MCF 10A (cell line): ENCODE measurements at regions of chr15 and their contacts with region 1.

Region 1: GRCh38 chr15:60397772-60398445 is at the start of gene ANXA2:
- DNase-seq: peak; percentile 90
- H3K4me3 Mint-ChIP-seq: peak within 1 kb of the TSS; percentile 98
- H3K27ac Mint-ChIP-seq: peak within 1 kb of the TSS; percentile 91
- H3K4me1 Mint-ChIP-seq: peaks cover 55% of the 10 kb centered on the region
- H3K27me3 Mint-ChIP-seq: no peaks in the 10 kb centered on the region
- CTCF ChIP-seq: no peak
- total RNA-seq, gene ANXA2: 3,317 and 3,451 TPM in 2 replicates

Region 2: GRCh38 chr15:60264566-60264965 is 133.3 kb before region 1 on chr15:
- CTCF ChIA-PET with region 1: no interaction called
- POLR2A ChIA-PET with region 1: no interaction called
- intact Hi-C with region 1: no loop called
- DNase-seq: no peak
- H3K4me3 Mint-ChIP-seq: no peak overlapping the region
- H3K27ac Mint-ChIP-seq: no peak overlapping the region
- H3K4me1 Mint-ChIP-seq: no peaks in the 10 kb centered on the region
- H3K27me3 Mint-ChIP-seq: peaks cover 33% of the 10 kb centered on the region
- CTCF ChIP-seq: no peak

Region 3: GRCh38 chr15:60362321-60363086 is 35.4 kb before region 1 on chr15:
- CTCF ChIA-PET with region 1: interaction called, 11 read pairs
- POLR2A ChIA-PET with region 1: interaction called, 165 read pairs
- intact Hi-C with region 1: loop called (anchors 5 kb)
- DNase-seq: peak; percentile 74
- H3K4me3 Mint-ChIP-seq: peak overlapping the region; percentile 5
- H3K27ac Mint-ChIP-seq: peak overlapping the region; percentile 93
- H3K4me1 Mint-ChIP-seq: peaks cover 41% of the 10 kb centered on the region
- H3K27me3 Mint-ChIP-seq: no peaks in the 10 kb centered on the region
- CTCF ChIP-seq: no peak

Region 4: GRCh38 chr15:60408438-60409105 is 10.7 kb after region 1 on chr15:
- CTCF ChIA-PET with region 1: no interaction called
- POLR2A ChIA-PET with region 1: interaction called, 238 read pairs
- intact Hi-C with region 1: loop called (anchors 1 kb)
- DNase-seq: peak; percentile 95
- H3K4me3 Mint-ChIP-seq: peak overlapping the region; percentile 2
- H3K27ac Mint-ChIP-seq: peak overlapping the region; percentile 87
- H3K4me1 Mint-ChIP-seq: peaks cover 28% of the 10 kb centered on the region
- H3K27me3 Mint-ChIP-seq: no peaks in the 10 kb centered on the region
- CTCF ChIP-seq: no peak

Region 5: DNA sequence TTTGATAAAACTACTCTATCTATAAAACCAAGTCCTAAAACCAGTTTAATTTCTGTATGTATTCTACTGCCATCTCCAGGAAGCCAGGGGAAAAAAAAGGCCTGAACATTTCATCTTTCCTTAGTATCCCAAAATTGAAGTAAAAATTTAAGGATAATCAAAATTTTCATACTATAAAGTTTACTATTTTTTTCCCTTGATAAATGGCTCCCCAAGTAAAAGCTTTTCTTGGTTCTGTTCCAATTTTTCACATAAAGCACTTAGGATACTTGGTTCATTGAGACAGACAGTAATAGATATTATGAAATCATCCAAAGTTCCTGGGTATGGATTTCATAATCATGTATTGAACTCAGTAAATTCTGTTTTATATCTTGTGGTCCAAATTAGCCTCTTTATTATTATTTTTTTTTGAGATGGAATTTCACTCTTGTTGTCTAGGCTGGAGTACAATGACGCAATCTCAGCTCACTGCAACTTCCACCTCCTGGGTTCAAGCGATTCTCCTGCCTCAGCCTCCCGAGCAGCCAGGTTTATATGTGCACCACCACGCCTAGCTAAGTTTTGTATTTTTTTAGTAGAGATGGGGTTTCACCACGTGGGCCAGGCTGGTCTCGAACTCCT is 46.5 kb after region 1 on chr15:
- CTCF ChIA-PET with region 1: interaction called, 3 read pairs
- POLR2A ChIA-PET with region 1: interaction called, 67 read pairs
- intact Hi-C with region 1: loop called (anchors 1 kb)
- DNase-seq: peak; percentile 50
- H3K4me3 Mint-ChIP-seq: no peak overlapping the region
- H3K27ac Mint-ChIP-seq: peak overlapping the region; percentile 39
- H3K4me1 Mint-ChIP-seq: peaks cover 5% of the 10 kb centered on the region
- H3K27me3 Mint-ChIP-seq: no peaks in the 10 kb centered on the region
- CTCF ChIP-seq: peak; percentile 45

Region 6: GRCh38 chr15:60582370-60583036 is 184.6 kb after region 1 on chr15:
- CTCF ChIA-PET with region 1: no interaction called
- POLR2A ChIA-PET with region 1: no interaction called
- intact Hi-C with region 1: no loop called
- DNase-seq: peak; percentile 38
- H3K4me3 Mint-ChIP-seq: no peak overlapping the region
- H3K27ac Mint-ChIP-seq: no peak overlapping the region
- H3K4me1 Mint-ChIP-seq: peaks cover 6% of the 10 kb centered on the region
- H3K27me3 Mint-ChIP-seq: no peaks in the 10 kb centered on the region
- CTCF ChIP-seq: no peak